HEK293T (cell line): ENCODE measurements at regions of chr9 and their contacts with region 1.

Region 1: GRCh38 chr9:97906236-97906831 is 16.0 kb downstream of the TRMO start:
- DNase-seq: no peak

Region 2: GRCh38 chr9:98149422-98149821 is 243.1 kb after region 1 on chr9:
- CTCF ChIA-PET with region 1: interaction called, 10 read pairs
- POLR2A ChIA-PET with region 1: no interaction called
- DNase-seq: no peak